Activated CD4-positive, alpha-beta T cell treated with anti-CD3 and anti-CD28 coated beads for 36 hours (primary cell): ENCODE measurements at regions of chr21 and their contacts with region 1.

Region 1: GRCh38 chr21:35051287-35051818 is 2.3 kb upstream of the RUNX1 start:
- DNase-seq: peak; percentile 91
- ATAC-seq: peak; percentile 52
- H3K4me3 Mint-ChIP-seq: peak overlapping the region; percentile 87
- H3K27ac Mint-ChIP-seq: peak overlapping the region; percentile 95
- H3K4me1 Mint-ChIP-seq: peaks cover 49% of the 10 kb centered on the region
- H3K27me3 Mint-ChIP-seq: no peaks in the 10 kb centered on the region

Region 2: DNA sequence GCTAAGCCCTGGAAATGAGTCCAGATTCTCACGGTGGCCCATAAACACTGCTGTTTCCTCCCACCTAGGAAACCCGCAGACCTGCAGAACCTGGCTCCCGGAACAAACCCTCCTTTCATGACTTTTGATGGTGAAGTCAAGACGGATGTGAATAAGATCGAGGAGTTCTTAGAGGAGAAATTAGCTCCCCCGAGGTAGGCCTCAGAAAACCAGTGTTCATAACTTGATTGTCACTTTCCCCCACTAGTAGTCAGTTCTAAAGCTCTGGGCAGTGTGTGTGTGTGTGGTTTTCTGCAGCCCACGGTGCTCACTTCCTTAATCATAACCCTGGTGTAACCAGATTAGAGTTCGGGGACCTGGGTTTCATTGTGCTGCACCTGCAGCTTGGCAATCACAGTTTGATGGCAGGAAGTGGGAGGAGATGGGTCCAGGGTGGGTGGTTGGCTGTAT is 343.5 kb before region 1 on chr21:
- CTCF ChIA-PET with region 1: no interaction called
- POLR2A ChIA-PET with region 1: no interaction called
- intact Hi-C with region 1: loop called (anchors 1 to 10 kb)
- DNase-seq: peak; percentile 83
- ATAC-seq: peak; percentile 94
- H3K4me3 Mint-ChIP-seq: no peak overlapping the region
- H3K27ac Mint-ChIP-seq: peak overlapping the region; percentile 49
- H3K4me1 Mint-ChIP-seq: peaks cover 26% of the 10 kb centered on the region
- H3K27me3 Mint-ChIP-seq: peaks cover 16% of the 10 kb centered on the region

Region 3: GRCh38 chr21:34933609-34934335 is 117.6 kb before region 1 on chr21:
- CTCF ChIA-PET with region 1: interaction called, 10 read pairs
- POLR2A ChIA-PET with region 1: interaction called, 8 read pairs
- intact Hi-C with region 1: loop called (anchors 2 kb)
- DNase-seq: peak; percentile 40
- ATAC-seq: peak; percentile 85
- H3K4me3 Mint-ChIP-seq: peak overlapping the region; percentile 68
- H3K27ac Mint-ChIP-seq: peak overlapping the region; percentile 96
- H3K4me1 Mint-ChIP-seq: peaks cover 84% of the 10 kb centered on the region
- H3K27me3 Mint-ChIP-seq: no peaks in the 10 kb centered on the region

Region 4: DNA sequence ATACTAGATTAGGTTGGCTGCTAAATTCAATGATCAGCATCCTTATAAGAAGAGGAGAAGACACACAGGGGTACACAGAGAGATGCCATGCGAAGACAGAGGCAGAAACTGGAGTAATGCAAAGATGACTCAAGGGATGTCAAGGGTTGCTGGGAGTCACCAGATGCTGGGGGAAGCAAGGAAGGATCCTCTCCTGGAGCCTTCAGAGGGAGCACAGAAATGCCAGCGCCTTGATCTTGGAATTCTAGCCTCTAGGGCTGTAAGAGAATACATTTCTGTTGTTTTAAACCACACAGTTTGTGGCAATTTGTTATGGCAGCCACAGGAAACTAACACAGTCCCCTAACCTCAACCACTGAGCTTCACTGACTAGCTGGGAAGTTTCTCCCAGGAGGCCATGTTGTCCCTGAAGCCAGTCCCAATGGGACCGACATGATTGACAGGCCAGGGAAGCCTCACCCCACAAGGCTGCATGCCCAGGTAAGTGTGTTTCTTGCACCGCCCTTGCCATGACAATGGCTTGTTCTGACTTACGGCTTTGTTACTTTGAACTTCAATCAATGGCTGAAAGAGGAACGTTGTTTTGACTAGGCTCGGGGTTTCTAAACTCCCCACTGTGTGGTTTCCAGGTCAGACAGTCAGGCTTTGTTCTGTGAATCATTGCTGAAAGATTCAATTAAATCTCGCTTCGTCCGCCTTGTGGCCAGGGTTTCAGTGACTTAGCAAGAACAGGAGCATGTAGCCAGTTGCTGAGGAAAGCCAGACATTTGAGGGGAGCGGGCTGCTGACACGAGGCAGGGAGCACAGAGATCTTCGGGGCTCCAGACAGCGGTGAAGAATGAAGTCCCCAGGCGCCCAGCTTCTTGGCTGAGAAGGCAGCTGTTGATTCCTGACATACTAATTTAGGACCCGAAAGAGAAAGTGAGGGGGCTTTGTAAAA is 64.5 kb before region 1 on chr21:
- CTCF ChIA-PET with region 1: interaction called, 10 read pairs
- POLR2A ChIA-PET with region 1: interaction called, 35 read pairs
- intact Hi-C with region 1: loop called in 1 of 2 experiments (anchors 1 kb)
- DNase-seq: peak; percentile 90
- ATAC-seq: peak; percentile 54
- H3K4me3 Mint-ChIP-seq: peak overlapping the region; percentile 61
- H3K27ac Mint-ChIP-seq: peak overlapping the region; percentile 89
- H3K4me1 Mint-ChIP-seq: peaks cover 97% of the 10 kb centered on the region
- H3K27me3 Mint-ChIP-seq: no peaks in the 10 kb centered on the region

Region 5: GRCh38 chr21:35084869-35085268 is 33.5 kb after region 1 on chr21:
- CTCF ChIA-PET with region 1: interaction called, 10 read pairs
- POLR2A ChIA-PET with region 1: interaction called, 24 read pairs
- intact Hi-C with region 1: loop called (anchors 1 kb)
- DNase-seq: no peak
- ATAC-seq: no peak
- H3K4me3 Mint-ChIP-seq: no peak overlapping the region
- H3K27ac Mint-ChIP-seq: no peak overlapping the region
- H3K4me1 Mint-ChIP-seq: peaks cover 44% of the 10 kb centered on the region
- H3K27me3 Mint-ChIP-seq: no peaks in the 10 kb centered on the region

Region 6: DNA sequence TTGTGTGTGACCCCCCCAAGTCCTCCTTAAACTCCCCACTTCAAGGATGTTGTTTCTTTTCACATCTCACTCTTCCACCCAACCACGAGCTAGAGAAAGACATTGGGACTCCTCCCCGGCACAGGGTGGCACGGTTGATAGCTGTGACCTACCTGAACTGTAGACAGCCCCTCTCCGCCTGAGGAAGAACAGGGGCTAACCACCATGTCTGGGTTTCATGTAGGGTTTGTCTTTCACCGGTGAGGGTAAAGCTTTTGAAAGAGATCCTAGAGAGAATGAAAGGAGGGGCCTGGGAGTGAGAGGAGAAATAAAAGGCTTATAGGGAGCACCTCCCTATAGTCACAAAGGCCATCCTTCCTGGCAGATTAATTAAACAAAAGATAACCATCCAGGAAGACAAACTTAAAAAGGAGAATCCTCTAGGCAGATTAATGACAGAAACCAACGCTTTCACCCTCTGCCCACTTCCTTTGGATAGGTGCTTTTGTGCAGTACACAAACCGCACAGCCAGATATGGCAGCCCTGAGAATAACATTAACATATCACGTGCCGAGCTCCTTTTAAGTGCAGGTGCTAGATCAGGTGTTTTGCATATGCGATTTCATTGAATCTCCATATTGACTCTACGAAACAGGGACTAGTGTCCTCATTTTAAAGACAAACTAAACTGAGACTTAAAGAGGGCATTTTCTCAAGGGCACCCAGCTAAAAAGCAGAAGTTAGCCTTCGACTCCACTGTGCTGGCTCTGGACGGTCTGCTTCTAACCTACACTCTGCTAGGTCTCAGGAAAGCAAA is 175.8 kb after region 1 on chr21:
- CTCF ChIA-PET with region 1: interaction called, 3 read pairs
- POLR2A ChIA-PET with region 1: no interaction called
- intact Hi-C with region 1: loop called (anchors 1 kb)
- DNase-seq: peak; percentile 73
- ATAC-seq: peak; percentile 83
- H3K4me3 Mint-ChIP-seq: peak overlapping the region; percentile 45
- H3K27ac Mint-ChIP-seq: peak overlapping the region; percentile 85
- H3K4me1 Mint-ChIP-seq: peaks cover 37% of the 10 kb centered on the region
- H3K27me3 Mint-ChIP-seq: no peaks in the 10 kb centered on the region

Region 7: DNA sequence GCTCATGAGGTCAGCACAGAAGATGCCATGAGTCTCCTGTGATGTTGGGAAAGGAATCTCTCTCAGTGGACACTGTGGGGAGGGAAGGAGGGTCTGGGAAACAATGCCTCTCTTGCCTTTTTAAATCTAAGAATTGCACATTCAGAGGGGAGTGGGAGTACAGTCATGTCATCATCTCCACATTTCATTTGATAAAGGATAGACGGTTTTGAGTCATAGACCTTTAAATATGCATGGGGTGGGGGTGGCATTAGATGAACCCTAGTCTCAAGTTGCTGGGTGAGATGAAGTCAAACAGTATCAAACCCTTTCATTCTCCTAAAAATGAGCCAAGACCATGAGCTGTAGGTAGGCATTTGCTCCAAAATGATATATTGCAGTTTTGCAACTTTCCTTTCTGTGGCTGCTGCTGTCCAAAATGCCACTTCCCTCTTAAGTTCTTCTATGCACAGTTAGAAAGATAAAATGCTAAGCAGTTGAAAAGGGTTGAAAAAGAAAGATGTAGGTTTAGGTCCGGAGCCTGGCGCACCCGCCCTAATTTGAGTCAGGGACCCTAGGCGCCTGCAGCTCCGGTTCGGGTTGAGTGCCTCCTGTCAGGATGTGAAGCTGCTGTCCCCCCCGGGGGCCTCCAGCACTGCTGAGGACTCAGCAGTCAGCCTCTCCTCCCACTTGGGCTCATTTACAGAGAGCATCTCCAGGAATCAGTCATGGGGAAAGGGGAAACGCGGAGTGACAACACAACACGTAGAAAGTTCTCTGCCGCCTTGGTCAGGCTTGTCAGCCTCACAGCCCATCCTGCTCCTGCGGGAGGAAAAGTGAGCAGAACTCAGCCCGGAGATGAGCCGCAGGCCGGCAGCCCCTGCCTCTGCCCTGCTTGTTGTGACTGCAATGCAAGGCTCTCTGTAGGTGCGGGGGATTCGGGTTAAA is 477.0 kb after region 1 on chr21:
- CTCF ChIA-PET with region 1: interaction called, 5 read pairs
- POLR2A ChIA-PET with region 1: no interaction called
- intact Hi-C with region 1: loop called in 1 of 2 experiments (anchors 1 kb)
- DNase-seq: peak; percentile 79
- ATAC-seq: peak; percentile 88
- H3K4me3 Mint-ChIP-seq: peak overlapping the region; percentile 75
- H3K27ac Mint-ChIP-seq: peak overlapping the region; percentile 93
- H3K4me1 Mint-ChIP-seq: peaks cover 44% of the 10 kb centered on the region
- H3K27me3 Mint-ChIP-seq: no peaks in the 10 kb centered on the region